ENCODE measurements at regions of chr4 and their contacts with region 1.

Region 1: DNA sequence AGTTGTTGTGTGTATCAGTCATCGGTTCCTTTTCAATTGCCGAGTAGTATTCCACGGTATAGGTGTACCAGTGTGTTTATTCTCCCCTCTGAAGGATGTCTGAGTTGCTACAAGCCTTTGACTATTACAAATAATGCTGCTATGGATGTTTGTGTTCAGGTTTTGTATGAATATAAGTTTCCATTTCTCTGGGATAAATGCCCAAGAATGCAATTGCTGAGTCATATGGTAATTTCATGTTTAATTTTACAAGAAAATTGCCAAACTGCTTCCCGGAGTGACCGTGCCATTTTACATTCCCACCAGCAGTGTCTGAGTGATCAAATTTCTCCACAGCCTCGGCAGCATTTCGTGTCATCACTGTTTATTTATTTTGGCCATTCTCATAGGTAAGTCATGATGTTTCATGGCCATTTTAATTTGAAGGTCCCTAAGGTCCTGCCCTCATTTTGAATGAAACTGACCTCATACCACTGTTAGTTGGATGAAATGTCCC is 73.9 kb downstream of the IRF2 start:
- DNase-seq: peak; percentile 92
- H3K4me3 ChIP-seq: no peak overlapping the region
- H3K27ac ChIP-seq: peak overlapping the region; percentile 89
- H3K4me1 ChIP-seq: peaks cover 29% of the 10 kb centered on the region
- H3K27me3 ChIP-seq: no peaks in the 10 kb centered on the region
- CTCF ChIP-seq: peak; percentile 28 to 41

Region 2: DNA sequence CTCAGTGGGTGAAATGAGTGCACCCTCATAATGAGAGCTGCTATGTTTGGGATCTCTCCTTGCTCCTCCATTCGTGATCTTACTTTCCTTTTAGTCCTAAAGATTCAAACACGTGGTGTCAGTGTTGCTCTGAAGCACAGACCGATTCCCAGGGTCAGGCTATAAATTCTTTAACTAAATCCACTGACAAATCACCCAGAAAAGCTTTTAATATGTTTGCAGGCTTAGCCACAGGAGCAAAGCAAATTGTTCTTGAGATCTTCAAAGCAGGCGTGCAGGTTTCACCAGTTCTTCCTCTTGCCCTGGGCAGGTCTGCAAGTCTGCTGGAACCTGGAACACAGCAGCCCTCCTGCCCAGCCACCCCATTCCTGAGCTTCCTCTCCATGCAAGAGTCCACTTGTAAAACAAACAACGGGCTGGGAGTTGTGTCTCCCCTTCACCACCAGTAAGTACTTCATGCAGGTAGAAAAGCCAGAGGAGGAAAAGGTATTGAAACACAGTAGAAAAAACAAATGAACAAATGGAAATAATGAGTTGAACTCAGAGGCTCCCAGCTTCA is 112.6 kb before region 1 on chr4:
- CTCF ChIA-PET with region 1: interaction called, 3 read pairs
- dilution Hi-C with region 1: no loop called
- in situ Hi-C with region 1: no loop called
- intact Hi-C with region 1: loop called (anchors 1 kb)
- DNase-seq: peak; percentile 50
- H3K4me3 ChIP-seq: no peak overlapping the region
- H3K27ac ChIP-seq: no peak overlapping the region
- H3K4me1 ChIP-seq: peaks cover 8% of the 10 kb centered on the region
- H3K27me3 ChIP-seq: no peaks in the 10 kb centered on the region
- CTCF ChIP-seq: peak; percentile 4 to 47

Region 3: GRCh38 chr4:184310171-184310567 is 90.3 kb before region 1 on chr4:
- CTCF ChIA-PET with region 1: no interaction called
- dilution Hi-C with region 1: no loop called
- in situ Hi-C with region 1: no loop called
- intact Hi-C with region 1: loop called (anchors 1 kb)
- DNase-seq: no peak
- H3K4me3 ChIP-seq: no peak overlapping the region
- H3K27ac ChIP-seq: no peak overlapping the region
- H3K4me1 ChIP-seq: peaks cover 5% of the 10 kb centered on the region
- H3K27me3 ChIP-seq: no peaks in the 10 kb centered on the region
- CTCF ChIP-seq: peak in 1 of 2 donors; percentile 8

Region 4: GRCh38 chr4:184417802-184418511 is 17.5 kb after region 1 on chr4:
- CTCF ChIA-PET with region 1: no interaction called
- dilution Hi-C with region 1: no loop called
- in situ Hi-C with region 1: no loop called
- intact Hi-C with region 1: loop called (anchors 2 kb)
- DNase-seq: peak; percentile 99
- H3K4me3 ChIP-seq: peak overlapping the region in 2 of 3 experiments; percentile 3 to 12
- H3K27ac ChIP-seq: peak overlapping the region; percentile 89
- H3K4me1 ChIP-seq: peaks cover 29% of the 10 kb centered on the region
- H3K27me3 ChIP-seq: no peaks in the 10 kb centered on the region
- CTCF ChIP-seq: peak; percentile 6 to 41

Region 5: DNA sequence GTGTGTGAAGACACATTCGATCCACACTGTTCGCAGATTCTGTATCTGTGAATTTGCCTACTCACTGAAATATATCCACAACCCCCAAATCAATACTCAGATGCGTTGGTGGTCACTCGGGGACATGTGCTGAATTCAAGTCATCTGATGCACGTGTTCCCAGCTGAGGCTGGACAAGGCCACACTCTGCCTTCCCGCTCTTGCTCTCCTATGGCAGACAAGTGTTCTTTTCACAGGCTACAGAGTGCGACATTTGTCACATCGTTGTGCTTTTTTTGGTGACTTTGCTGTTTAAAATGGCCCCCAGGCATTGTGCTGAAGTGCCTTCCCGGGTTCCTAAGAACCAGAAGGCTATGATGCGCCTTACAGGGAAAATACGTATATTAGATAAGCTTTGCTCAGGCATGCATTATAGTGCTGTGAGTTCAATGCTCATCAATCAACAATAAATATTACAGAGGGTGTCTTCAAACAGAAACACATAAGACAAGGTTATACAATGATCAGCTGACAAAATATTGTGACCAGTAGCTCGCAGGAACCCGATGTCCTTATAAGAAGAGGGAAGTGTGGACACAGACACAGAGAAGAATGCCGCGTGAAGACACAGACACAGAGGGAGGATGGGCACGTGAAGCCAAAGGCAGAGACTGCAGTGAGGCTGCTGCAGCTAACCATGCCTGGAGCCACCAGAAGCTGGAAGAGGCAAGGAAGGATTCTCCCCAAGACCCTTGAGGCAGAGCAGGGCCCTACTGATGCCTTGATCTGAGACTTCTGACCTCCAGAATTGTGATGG is 31.9 kb after region 1 on chr4:
- CTCF ChIA-PET with region 1: no interaction called
- dilution Hi-C with region 1: no loop called
- in situ Hi-C with region 1: no loop called
- intact Hi-C with region 1: loop called (anchors 2 kb)
- DNase-seq: no peak
- H3K4me3 ChIP-seq: no peak overlapping the region
- H3K27ac ChIP-seq: no peak overlapping the region
- H3K4me1 ChIP-seq: no peaks in the 10 kb centered on the region
- H3K27me3 ChIP-seq: no peaks in the 10 kb centered on the region
- CTCF ChIP-seq: no peak

Region 6: DNA sequence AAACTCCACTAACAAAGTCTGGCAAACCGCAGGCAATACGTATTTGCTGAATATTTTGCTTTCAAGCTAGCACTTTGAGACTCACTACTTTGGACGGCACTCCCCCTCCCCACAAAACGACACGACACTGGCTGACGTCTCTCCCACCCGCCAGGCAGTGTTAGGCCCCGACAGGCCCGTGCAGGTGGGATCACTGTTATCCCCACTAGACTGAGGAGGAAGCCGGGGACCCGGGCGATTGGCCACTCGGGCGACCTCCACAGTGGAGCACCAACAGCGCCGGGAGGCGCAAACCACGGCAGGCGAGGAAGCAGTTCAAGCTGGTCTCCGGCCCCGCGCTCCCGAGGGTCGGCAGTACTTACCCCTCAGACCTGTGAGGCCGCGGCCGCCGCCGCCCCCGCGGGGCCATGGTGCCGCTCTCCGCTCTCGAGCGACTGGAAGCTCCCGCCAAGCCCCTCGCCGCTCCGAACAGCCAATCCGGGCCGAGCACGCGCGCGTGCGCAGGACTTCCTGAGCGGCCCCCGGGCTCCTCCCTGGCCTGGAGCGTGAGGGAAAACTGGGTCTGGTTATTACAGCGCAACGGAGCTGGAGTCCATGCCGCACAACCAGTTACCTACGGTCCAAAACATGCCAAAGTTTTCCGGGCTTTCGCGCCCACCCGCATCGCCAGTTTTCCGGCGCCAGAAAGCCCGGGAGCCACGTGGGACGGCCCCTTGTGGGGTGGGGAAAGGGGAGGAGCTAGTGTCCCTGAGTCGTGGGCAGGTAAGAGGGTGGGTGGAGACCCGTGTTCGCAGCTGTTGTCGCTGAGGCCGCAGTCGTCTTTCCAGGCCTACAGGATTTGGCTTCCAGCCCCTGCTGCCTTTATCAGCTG is 333.5 kb after region 1 on chr4 and contains the start of gene CENPU:
- CTCF ChIA-PET with region 1: no interaction called
- dilution Hi-C with region 1: no loop called
- in situ Hi-C with region 1: no loop called
- intact Hi-C with region 1: loop called (anchors 10 kb)
- DNase-seq: peak; percentile 98
- H3K4me3 ChIP-seq: peak within 1 kb of the TSS; percentile 57 to 98 (median 94)
- H3K27ac ChIP-seq: peak within 1 kb of the TSS; percentile 96
- H3K4me1 ChIP-seq: peaks cover 31% of the 10 kb centered on the region
- H3K27me3 ChIP-seq: no peaks in the 10 kb centered on the region
- CTCF ChIP-seq: no peak
- total RNA-seq, gene CENPU: 4.5 to 38.3 TPM